ENCODE measurements at regions of chr5 and their contacts with region 1.

Region 1: DNA sequence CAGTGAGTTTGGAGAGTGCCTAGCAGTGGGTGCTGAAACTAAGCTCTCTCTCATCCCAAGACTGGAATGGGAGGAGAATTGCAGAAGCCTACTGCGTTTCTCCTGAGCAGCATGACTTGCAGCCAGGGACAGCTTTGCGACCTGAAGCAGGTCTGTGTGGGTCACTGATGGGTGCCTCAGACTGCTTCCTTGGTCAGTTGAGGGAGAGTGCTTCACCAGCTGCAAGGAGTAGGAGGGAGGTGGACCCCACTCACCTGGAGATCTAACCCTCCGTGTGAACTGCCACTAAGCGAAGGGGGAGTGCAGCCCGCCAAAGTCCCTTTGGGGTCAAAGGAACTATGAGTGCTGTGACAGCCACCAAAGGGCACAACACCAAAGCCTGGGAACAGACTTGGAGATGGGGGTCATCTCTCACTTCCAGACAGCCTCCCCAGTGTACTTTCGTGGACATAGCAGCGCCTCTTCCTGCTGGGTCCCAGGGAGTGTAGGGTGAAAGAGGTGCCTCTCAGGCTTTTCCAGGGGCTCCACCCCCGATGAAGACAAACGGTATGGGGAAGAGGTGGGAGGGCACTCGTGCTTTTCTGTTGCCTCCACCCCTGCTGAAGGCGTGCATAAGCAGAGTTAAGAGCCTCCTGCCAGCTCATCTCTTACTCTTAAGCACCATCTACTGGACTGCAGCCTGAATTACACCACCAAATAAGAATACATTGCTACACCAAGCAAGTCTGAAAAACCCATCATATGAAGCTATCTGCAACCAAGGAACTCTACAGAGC is 34.3 kb upstream of the MACIR start:
- DNase-seq: peak; percentile 57
- ATAC-seq: peak; percentile 100
- H3K4me3 Mint-ChIP-seq: no peak overlapping the region
- H3K27ac Mint-ChIP-seq: no peak overlapping the region
- H3K4me1 Mint-ChIP-seq: no peaks in the 10 kb centered on the region
- H3K27me3 Mint-ChIP-seq: peaks cover 11% of the 10 kb centered on the region
- CTCF ChIP-seq: peak; percentile 74

Region 2: GRCh38 chr5:103188436-103188835 is 35.9 kb before region 1 on chr5:
- CTCF ChIA-PET with region 1: interaction called, 11 read pairs
- POLR2A ChIA-PET with region 1: no interaction called
- intact Hi-C with region 1: no loop called
- DNase-seq: no peak
- ATAC-seq: no peak
- H3K4me3 Mint-ChIP-seq: no peak overlapping the region
- H3K27ac Mint-ChIP-seq: no peak overlapping the region
- H3K4me1 Mint-ChIP-seq: peaks cover 9% of the 10 kb centered on the region
- H3K27me3 Mint-ChIP-seq: no peaks in the 10 kb centered on the region
- CTCF ChIP-seq: no peak

Region 3: GRCh38 chr5:103211576-103212561 is 12.4 kb before region 1 on chr5:
- CTCF ChIA-PET with region 1: interaction called, 24 read pairs
- POLR2A ChIA-PET with region 1: interaction called, 3 read pairs
- intact Hi-C with region 1: no loop called
- DNase-seq: no peak
- ATAC-seq: peak; percentile 75
- H3K4me3 Mint-ChIP-seq: no peak overlapping the region
- H3K27ac Mint-ChIP-seq: peak overlapping the region; percentile 11
- H3K4me1 Mint-ChIP-seq: peaks cover 32% of the 10 kb centered on the region
- H3K27me3 Mint-ChIP-seq: no peaks in the 10 kb centered on the region
- CTCF ChIP-seq: no peak

Region 4: GRCh38 chr5:103243665-103244064 is 19.4 kb after region 1 on chr5:
- CTCF ChIA-PET with region 1: interaction called, 11 read pairs
- POLR2A ChIA-PET with region 1: no interaction called
- intact Hi-C with region 1: no loop called
- DNase-seq: no peak
- ATAC-seq: no peak
- H3K4me3 Mint-ChIP-seq: no peak overlapping the region
- H3K27ac Mint-ChIP-seq: no peak overlapping the region
- H3K4me1 Mint-ChIP-seq: peaks cover 9% of the 10 kb centered on the region
- H3K27me3 Mint-ChIP-seq: peaks cover 26% of the 10 kb centered on the region
- CTCF ChIP-seq: no peak

Region 5: GRCh38 chr5:103475629-103476240 is 251.4 kb after region 1 on chr5:
- CTCF ChIA-PET with region 1: interaction called, 21 read pairs
- POLR2A ChIA-PET with region 1: no interaction called
- intact Hi-C with region 1: no loop called
- DNase-seq: no peak
- ATAC-seq: no peak
- H3K4me3 Mint-ChIP-seq: no peak overlapping the region
- H3K27ac Mint-ChIP-seq: no peak overlapping the region
- H3K4me1 Mint-ChIP-seq: no peaks in the 10 kb centered on the region
- H3K27me3 Mint-ChIP-seq: peaks cover 10% of the 10 kb centered on the region
- CTCF ChIP-seq: peak; percentile 70